HEK293 (cell line): ENCODE measurements at regions of chr6 and their contacts with region 1.

Region 1: DNA sequence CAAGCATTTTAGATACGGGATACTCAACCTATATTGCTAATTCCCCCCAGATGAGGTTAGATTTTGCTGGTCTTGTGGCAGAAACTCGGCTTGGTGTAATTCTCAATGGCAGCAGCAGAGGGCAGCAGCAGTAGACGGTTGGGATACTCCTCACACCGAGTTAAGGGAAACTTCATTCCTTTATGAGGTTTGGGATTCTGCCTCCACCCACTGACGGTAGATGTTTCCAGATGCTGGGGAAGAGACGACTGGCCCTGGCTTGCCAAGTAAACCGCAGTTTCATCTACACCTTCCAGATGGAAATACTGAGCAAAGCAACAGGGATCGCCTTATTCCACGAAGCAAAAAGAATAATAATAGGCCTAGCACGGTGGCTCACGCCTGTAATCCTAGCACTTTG is 8.2 kb upstream of the TBC1D7 start:
- H3K4me3 ChIP-seq: no peak overlapping the region
- H3K27ac ChIP-seq: no peak overlapping the region
- H3K4me1 ChIP-seq: no peaks in the 10 kb centered on the region
- CTCF ChIP-seq: peak; percentile 76

Region 2: GRCh38 chr6:13272131-13273046 is 64.2 kb before region 1 on chr6:
- CTCF ChIA-PET with region 1: no interaction called
- POLR2A ChIA-PET with region 1: no interaction called
- H3K4me3 ChIP-seq: no peak overlapping the region
- H3K27ac ChIP-seq: no peak overlapping the region
- H3K4me1 ChIP-seq: 0 out of 2 replicates have a peak, but pooled peaks cover 2% of the 10 kb centered on the region
- CTCF ChIP-seq: no peak

Region 3: DNA sequence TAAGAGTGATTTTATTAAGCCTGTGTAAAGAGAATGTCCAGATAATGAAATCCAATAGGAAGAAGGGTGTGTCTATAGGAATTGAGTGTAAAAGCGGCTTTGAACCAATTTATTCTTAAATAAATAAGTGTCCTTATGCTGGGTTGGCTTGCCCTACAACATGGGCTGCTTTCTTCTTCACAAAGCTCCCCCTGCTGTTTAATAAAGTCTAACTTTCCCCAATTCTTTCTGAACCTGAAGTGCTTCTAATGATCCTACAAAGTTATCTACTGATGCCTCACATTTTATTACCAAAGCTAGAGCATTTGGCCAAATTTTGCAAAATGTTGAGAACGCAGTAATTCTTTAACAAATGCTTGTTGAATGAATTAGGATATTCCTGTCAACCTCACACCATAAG is 201.5 kb after region 1 on chr6:
- CTCF ChIA-PET with region 1: interaction called, 23 read pairs
- POLR2A ChIA-PET with region 1: no interaction called
- H3K4me3 ChIP-seq: no peak overlapping the region
- H3K27ac ChIP-seq: no peak overlapping the region
- H3K4me1 ChIP-seq: no peaks in the 10 kb centered on the region
- CTCF ChIP-seq: no peak